Mucosa of descending colon (tissue), 3 donors: ENCODE measurements at regions of chr3 and their contacts with region 1.

Region 1: GRCh38 chr3:25594007-25594502 is 70.7 kb downstream of the TOP2B start:
- DNase-seq: peak in 1 of 3 donors; percentile 34
- ATAC-seq: peak; percentile 36
- H3K4me3 ChIP-seq: no peak overlapping the region
- H3K4me1 ChIP-seq: peaks cover 6% of the 10 kb centered on the region
- CTCF ChIP-seq: peak; percentile 22

Region 2: GRCh38 chr3:24773798-24774197 is 820.3 kb before region 1 on chr3:
- intact Hi-C with region 1: loop called in 1 of 2 experiments (anchors 10 kb)
- DNase-seq: peak in 2 of 3 donors; percentile 39 to 49
- ATAC-seq: peak; percentile 56
- H3K4me3 ChIP-seq: no peak overlapping the region
- H3K4me1 ChIP-seq: no peaks in the 10 kb centered on the region
- CTCF ChIP-seq: peak; percentile 38

Region 3: GRCh38 chr3:25021816-25022215 is 572.2 kb before region 1 on chr3:
- intact Hi-C with region 1: loop called in 1 of 2 experiments (anchors 10 kb)
- DNase-seq: peak in 1 of 3 donors; percentile 15
- ATAC-seq: no peak
- H3K4me3 ChIP-seq: no peak overlapping the region
- H3K4me1 ChIP-seq: no peaks in the 10 kb centered on the region
- CTCF ChIP-seq: no peak